Panc1 (cell line): ENCODE measurements at regions of chr16 and their contacts with region 1.

Region 1: GRCh38 chr16:57576429-57576870 is 34.0 kb downstream of the ADGRG5 start:
- DNase-seq: peak; percentile 69
- ATAC-seq: peak; percentile 91
- H3K4me3 ChIP-seq: no peak overlapping the region
- H3K27ac ChIP-seq: no peak overlapping the region
- H3K4me1 ChIP-seq: no peaks in the 10 kb centered on the region; the same call in 1 of the 2 replicates
- H3K27me3 ChIP-seq: no peaks in the 10 kb centered on the region
- CTCF ChIP-seq: peak; percentile 93

Region 2: DNA sequence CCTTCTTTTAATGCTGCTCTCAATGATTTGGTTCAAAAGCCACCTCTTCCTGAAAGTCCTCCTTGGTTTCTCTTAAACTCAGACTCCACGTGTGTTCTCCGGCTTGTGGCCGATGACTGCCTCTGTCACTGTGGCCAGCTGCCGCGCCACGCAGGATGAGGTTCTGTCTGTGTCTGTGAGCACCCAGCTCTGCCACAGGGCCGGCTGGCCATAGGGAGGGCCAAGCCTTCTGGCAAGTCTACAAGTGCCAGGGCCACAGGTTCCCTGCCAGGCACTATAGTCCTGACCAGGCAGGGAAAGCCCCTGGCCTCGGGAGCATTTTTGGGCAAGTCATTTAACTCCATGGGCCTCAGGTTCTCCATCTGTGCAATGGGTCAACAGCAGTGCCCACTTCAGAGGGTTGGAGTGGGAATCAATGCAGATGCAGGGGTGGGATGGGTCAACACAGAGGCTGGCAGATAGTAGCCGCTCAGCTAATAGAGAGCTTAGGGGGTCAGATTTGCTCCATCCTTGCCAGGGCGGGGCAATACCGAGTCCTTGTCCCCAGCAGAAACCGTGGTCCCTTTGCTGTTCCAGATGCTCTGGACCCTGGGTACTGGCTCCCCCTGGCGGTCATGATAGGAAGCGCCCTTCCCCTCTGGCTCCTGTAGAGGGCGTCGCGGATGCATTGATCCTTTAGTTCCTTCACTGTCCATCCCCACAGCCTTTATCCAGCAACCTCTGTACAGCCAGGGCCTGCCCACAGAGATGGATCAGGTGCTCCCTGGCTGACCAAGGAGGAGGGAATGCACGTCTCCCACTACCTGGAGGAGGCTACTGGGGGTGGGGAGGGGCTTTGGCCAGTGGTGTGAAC is 72.4 kb after region 1 on chr16:
- CTCF ChIA-PET with region 1: no interaction called
- POLR2A ChIA-PET with region 1: no interaction called
- in situ Hi-C with region 1: no loop called
- intact Hi-C with region 1: loop called (anchors 5 kb)
- DNase-seq: peak; percentile 85
- ATAC-seq: peak; percentile 79
- H3K4me3 ChIP-seq: no peak overlapping the region
- H3K27ac ChIP-seq: no peak overlapping the region
- H3K4me1 ChIP-seq: peaks cover 4% of the 10 kb centered on the region
- H3K27me3 ChIP-seq: no peaks in the 10 kb centered on the region
- CTCF ChIP-seq: peak; percentile 99

Region 3: DNA sequence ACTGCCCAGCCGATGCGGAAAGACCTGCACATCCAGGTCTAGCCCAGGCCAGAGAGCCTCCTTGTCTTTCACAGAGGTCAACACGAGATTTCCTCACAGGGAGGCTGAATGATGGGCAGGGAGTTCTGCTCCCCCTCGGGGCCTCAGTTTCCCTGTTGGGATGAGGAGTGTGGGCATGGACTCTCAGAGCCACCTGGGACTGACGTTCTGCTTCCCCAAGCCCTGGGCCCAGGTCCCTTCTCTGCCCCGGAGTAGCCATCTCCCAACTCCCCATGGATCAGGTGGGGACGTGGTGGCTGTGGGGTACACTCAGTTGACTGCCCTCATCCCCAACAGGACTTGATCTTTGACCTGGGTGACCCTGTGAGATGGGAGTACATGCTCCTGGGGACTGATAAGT is 141.6 kb after region 1 on chr16:
- CTCF ChIA-PET with region 1: interaction called, 3 read pairs
- POLR2A ChIA-PET with region 1: no interaction called
- in situ Hi-C with region 1: no loop called
- intact Hi-C with region 1: loop called (anchors 5 kb)
- DNase-seq: no peak
- ATAC-seq: no peak
- H3K4me3 ChIP-seq: no peak overlapping the region
- H3K27ac ChIP-seq: no peak overlapping the region
- H3K4me1 ChIP-seq: no peaks in the 10 kb centered on the region
- H3K27me3 ChIP-seq: no peaks in the 10 kb centered on the region
- CTCF ChIP-seq: no peak

Region 4: DNA sequence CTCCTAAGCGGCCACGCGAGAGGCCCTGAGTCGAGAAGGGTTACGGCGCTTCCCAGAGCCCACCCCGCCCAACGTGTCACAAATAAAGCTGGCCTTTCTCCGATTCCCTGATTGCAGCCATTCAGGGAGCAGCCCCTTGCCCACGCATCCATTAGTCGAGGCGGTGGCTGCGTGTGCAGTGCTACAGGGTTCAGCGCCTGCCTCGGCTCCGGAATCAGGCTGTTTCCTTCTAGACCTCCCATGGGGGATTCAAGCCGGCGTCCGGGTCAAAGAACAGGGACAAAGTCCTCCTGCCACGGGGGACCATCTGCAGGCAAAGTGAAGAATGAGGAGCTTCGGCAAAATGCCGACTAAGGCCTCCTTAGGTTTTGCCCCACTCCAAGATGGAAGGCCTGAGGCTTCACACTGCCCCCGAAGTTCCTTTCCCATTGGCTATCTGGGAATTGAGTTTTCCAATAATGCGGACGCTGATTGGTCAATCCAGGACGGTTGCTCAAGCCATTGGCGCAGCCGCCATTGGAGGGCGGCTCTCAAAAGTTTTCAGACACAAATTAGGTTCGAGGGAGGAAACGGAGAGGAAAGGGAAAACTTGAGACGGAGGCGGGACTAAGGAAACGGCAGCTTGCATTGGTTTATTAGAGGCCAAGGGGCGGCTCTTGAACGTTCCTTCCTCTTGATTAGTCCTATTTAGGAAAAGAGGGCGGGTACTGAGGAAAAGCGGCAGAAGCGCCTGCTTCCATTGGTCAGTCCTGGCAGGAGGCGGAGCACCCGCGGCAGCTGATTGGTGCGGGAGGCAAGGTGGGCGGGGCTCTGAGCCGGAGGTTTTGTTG is 158.7 kb after region 1 on chr16:
- CTCF ChIA-PET with region 1: interaction called, 17 read pairs
- POLR2A ChIA-PET with region 1: no interaction called
- in situ Hi-C with region 1: no loop called
- intact Hi-C with region 1: no loop called
- DNase-seq: peak; percentile 98
- ATAC-seq: peak; percentile 97
- H3K4me3 ChIP-seq: peak overlapping the region; percentile 75 to 81
- H3K27ac ChIP-seq: peak overlapping the region; percentile 93
- H3K4me1 ChIP-seq: peaks cover 4% of the 10 kb centered on the region
- H3K27me3 ChIP-seq: no peaks in the 10 kb centered on the region
- CTCF ChIP-seq: no peak

Region 5: GRCh38 chr16:57871456-57871855 is 295.0 kb after region 1 on chr16:
- CTCF ChIA-PET with region 1: interaction called, 11 read pairs
- POLR2A ChIA-PET with region 1: no interaction called
- in situ Hi-C with region 1: no loop called
- intact Hi-C with region 1: no loop called
- DNase-seq: no peak
- ATAC-seq: no peak
- H3K4me3 ChIP-seq: no peak overlapping the region
- H3K27ac ChIP-seq: no peak overlapping the region
- H3K4me1 ChIP-seq: no peaks in the 10 kb centered on the region
- H3K27me3 ChIP-seq: no peaks in the 10 kb centered on the region
- CTCF ChIP-seq: no peak